ENCODE measurements at regions of chr13 and their contacts with region 1.

Region 1: GRCh38 chr13:26946684-26947343 is 186.2 kb upstream of the GPR12 start:
- DNase-seq: no peak
- H3K4me3 ChIP-seq: no peak overlapping the region
- H3K27ac ChIP-seq: peak overlapping the region in 1 of 4 donors; percentile 4
- H3K4me1 ChIP-seq: peaks cover 0 to 42% (median 22%) of the 10 kb centered on the region in 4 donors
- H3K27me3 ChIP-seq: no peaks in the 10 kb centered on the region
- CTCF ChIP-seq: peak; percentile 75 to 95 (median 80)
- EP300 ChIP-seq: no peak
- POLR2A ChIP-seq: no peak

Region 2: DNA sequence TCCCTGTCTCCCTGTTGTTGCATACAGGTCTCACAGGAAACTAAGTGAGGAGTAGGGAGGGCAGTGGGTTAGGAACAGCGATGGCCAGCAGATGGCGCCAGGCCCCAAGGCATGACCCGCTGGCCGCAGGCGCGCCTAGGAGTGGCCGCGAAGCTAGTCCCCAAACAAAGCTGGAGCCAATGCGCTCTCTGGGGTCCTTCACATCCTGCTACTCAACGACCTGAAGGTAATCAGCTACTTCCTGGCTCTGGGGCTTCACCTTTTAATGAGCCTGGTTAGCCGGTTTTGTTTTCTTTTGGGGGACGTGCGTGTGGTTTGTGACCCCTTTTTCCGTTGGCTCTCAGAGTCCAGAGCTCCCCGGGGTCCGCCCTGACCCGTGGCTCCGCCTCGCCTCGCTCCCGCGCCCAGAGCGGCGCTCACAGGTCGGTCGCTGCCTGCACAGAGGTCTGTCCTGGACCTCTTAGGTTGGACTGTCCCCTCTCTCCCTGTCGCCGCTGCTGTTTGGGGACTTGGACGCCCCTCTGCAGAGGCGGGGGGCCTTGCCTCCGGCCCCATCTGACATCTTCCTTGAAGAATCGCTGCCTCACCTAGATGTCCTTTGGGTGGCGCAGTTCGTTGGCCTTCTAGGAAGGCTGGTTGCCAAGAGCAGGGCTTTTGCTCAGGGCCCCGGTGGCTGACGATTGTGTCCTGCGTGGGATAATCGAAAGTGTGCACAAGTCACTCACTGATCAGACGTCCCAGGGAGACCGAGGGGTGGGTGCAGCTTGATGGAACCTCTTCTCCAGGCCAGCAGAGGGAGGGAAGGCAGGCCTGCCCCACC is 415.5 kb after region 1 on chr13:
- in situ Hi-C with region 1: loop called in 1 of 4 experiments (anchors 10 kb)
- intact Hi-C with region 1: loop called (anchors 2 kb)
- DNase-seq: peak; percentile 92
- H3K4me3 ChIP-seq: peak overlapping the region; percentile 28 to 50 (median 32)
- H3K27ac ChIP-seq: peak overlapping the region; percentile 11 to 52 (median 21)
- H3K4me1 ChIP-seq: peaks cover 0 to 17% (median 9%) of the 10 kb centered on the region in 4 donors
- H3K27me3 ChIP-seq: peaks cover 5% of the 10 kb centered on the region
- CTCF ChIP-seq: peak; percentile 90 to 96 (median 94)
- EP300 ChIP-seq: no peak
- POLR2A ChIP-seq: no peak